ENCODE measurements at regions of chr10 and their contacts with region 1.

Region 1: DNA sequence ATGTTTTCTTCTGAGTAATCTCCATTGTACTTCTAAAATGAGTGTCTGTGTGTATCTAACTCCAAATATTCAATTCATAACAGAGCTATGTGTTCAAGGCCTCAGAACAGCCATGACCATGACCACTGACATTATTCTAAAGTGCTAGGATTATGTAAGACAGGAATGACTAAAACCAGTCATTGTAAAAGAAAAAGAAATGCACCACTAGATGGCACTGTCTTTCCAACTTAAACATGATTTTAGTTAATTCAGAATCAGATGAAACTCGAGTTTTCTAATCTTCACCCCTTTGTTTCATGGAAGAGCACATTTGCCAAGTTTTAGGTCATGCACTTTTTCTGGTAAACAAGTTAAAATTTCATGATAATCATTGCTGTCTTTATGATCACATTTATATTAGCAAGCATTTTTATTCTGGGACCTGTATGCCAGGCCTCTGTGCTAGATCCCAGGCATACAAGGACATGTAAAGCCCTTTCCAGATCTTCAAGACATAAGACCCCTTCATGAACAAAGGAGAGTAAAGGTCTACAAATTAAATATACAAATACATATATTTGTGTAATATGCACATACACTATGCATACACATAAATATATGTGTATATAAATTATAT is 26.1 kb upstream of the RSU1 start:
- DNase-seq: no peak
- ATAC-seq: peak; percentile 83 to 94 (median 88)
- H3K4me3 ChIP-seq: no peak overlapping the region
- H3K27ac ChIP-seq: no peak overlapping the region
- H3K4me1 ChIP-seq: no peaks in the 10 kb centered on the region
- H3K27me3 ChIP-seq: no peaks in the 10 kb centered on the region
- CTCF ChIP-seq: peak; percentile 56 to 69 (median 66)
- POLR2A ChIP-seq: no peak

Region 2: GRCh38 chr10:16689227-16689626 is 154.1 kb before region 1 on chr10:
- intact Hi-C with region 1: no loop called
- DNase-seq: no peak
- ATAC-seq: no peak
- H3K4me3 ChIP-seq: no peak overlapping the region
- H3K27ac ChIP-seq: no peak overlapping the region
- H3K4me1 ChIP-seq: no peaks in the 10 kb centered on the region
- H3K27me3 ChIP-seq: no peaks in the 10 kb centered on the region
- CTCF ChIP-seq: no peak
- POLR2A ChIP-seq: no peak

Region 3: GRCh38 chr10:17249820-17250219 is 406.5 kb after region 1 on chr10:
- intact Hi-C with region 1: loop called (anchors 5 kb)
- DNase-seq: no peak
- ATAC-seq: no peak
- H3K4me3 ChIP-seq: no peak overlapping the region
- H3K27ac ChIP-seq: no peak overlapping the region
- H3K4me1 ChIP-seq: no peaks in the 10 kb centered on the region
- H3K27me3 ChIP-seq: no peaks in the 10 kb centered on the region
- CTCF ChIP-seq: no peak
- POLR2A ChIP-seq: no peak

Region 4: GRCh38 chr10:17257466-17258321 is 414.3 kb after region 1 on chr10:
- intact Hi-C with region 1: loop called (anchors 5 kb)
- DNase-seq: peak in 1 of 3 donors; percentile 49
- ATAC-seq: peak; percentile 92 to 97 (median 95)
- H3K4me3 ChIP-seq: no peak overlapping the region
- H3K27ac ChIP-seq: no peak overlapping the region
- H3K4me1 ChIP-seq: no peaks in the 10 kb centered on the region
- H3K27me3 ChIP-seq: no peaks in the 10 kb centered on the region
- CTCF ChIP-seq: peak; percentile 81 to 85 (median 81)
- POLR2A ChIP-seq: no peak

Region 5: GRCh38 chr10:17428351-17429097 is 585.2 kb after region 1 on chr10:
- intact Hi-C with region 1: loop called in 1 of 2 experiments (anchors 10 kb)
- DNase-seq: no peak
- ATAC-seq: peak; percentile 46 to 58 (median 52)
- H3K4me3 ChIP-seq: no peak overlapping the region
- H3K27ac ChIP-seq: no peak overlapping the region
- H3K4me1 ChIP-seq: no peaks in the 10 kb centered on the region
- H3K27me3 ChIP-seq: no peaks in the 10 kb centered on the region
- CTCF ChIP-seq: no peak
- POLR2A ChIP-seq: no peak